A673 (cell line): ENCODE measurements at regions of chr14 and their contacts with region 1.

Region 1: GRCh38 chr14:102605025-102605424 is 12.6 kb downstream of the RCOR1 start:
- DNase-seq: no peak
- H3K4me3 ChIP-seq: no peak overlapping the region
- H3K27ac ChIP-seq: no peak overlapping the region
- H3K4me1 ChIP-seq: peaks cover 28% of the 10 kb centered on the region
- H3K27me3 ChIP-seq: no peaks in the 10 kb centered on the region
- CTCF ChIP-seq: no peak

Region 2: GRCh38 chr14:102645746-102646440 is 40.9 kb after region 1 on chr14:
- CTCF ChIA-PET with region 1: no interaction called
- POLR2A ChIA-PET with region 1: interaction called, 14 read pairs
- intact Hi-C with region 1: no loop called
- DNase-seq: peak; percentile 48
- H3K4me3 ChIP-seq: no peak overlapping the region
- H3K27ac ChIP-seq: peak overlapping the region; percentile 88
- H3K4me1 ChIP-seq: peaks cover 77% of the 10 kb centered on the region
- H3K27me3 ChIP-seq: no peaks in the 10 kb centered on the region
- CTCF ChIP-seq: no peak

Region 3: GRCh38 chr14:102683399-102684297 is 78.6 kb after region 1 on chr14:
- CTCF ChIA-PET with region 1: no interaction called
- POLR2A ChIA-PET with region 1: no interaction called
- intact Hi-C with region 1: no loop called
- DNase-seq: no peak
- H3K4me3 ChIP-seq: no peak overlapping the region
- H3K27ac ChIP-seq: peak overlapping the region; percentile 47
- H3K4me1 ChIP-seq: peaks cover 27% of the 10 kb centered on the region
- H3K27me3 ChIP-seq: no peaks in the 10 kb centered on the region
- CTCF ChIP-seq: no peak

Region 4: DNA sequence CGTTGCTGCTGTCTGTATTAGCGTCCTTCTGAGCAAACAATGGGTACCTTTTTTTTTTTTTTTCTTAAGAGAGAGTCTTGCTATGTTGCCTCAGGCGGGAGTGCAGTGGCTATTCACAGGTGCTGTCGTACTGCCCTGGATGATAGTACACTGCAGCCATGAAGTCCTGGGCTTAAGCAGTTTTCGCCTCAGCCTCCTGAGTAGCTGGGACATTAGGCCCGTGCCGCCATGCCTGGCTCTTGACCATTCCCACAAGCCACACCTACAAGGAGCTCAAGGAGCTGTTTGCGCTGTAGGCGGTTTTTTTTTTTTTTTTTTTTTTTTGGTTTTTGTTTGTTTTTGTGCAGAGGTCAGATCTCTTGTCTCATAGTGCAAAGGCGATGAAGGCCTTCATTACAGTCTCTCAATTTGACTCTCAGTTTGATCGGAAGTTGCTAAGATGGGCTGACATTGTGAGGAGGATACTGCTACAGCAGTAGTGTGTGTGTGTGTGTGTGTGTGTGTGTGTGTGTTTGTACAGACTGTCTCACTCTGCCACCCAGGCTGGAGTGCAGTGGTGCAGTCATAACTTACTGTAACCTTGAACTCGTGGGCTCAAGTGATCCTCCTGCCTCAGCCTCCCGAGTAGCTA is 206.3 kb after region 1 on chr14:
- CTCF ChIA-PET with region 1: no interaction called
- POLR2A ChIA-PET with region 1: interaction called, 11 read pairs
- intact Hi-C with region 1: no loop called
- DNase-seq: no peak
- H3K4me3 ChIP-seq: no peak overlapping the region
- H3K27ac ChIP-seq: no peak overlapping the region
- H3K4me1 ChIP-seq: no peaks in the 10 kb centered on the region
- H3K27me3 ChIP-seq: no peaks in the 10 kb centered on the region
- CTCF ChIP-seq: no peak

Region 5: DNA sequence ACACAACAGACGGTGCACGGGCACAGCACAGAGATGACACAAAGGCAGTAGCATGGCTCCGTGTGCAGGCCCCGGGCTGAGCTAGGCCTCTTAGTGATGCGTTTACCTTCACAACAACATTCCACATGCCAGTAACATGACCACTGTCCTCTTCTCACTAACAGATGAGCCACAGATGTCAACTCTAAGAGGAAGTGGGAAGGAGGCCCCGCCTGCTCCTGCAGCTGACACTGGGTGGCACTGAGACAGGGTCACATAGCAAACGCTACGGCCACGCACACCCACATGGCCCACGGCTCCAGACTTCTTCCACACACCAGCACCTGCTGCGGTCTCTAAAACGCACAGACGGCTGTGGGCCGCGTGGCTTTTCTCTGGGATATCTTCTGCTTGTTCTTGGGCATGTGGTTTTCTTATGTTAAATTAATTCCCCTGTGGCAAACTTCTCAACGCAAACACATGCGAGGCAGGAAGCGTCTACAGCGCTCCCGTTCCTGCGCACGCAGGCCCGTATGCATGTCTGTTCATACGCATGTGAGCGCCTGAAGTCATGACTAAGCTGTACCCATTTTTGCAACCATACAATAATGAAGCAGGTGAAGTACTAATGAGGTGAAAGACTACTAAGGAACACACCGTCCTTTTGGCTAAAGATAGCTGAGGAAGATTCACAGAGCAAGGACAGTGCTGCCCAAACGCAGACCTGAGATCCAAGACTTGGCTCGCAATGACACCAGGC is 344.2 kb after region 1 on chr14:
- CTCF ChIA-PET with region 1: no interaction called
- POLR2A ChIA-PET with region 1: interaction called, 19 read pairs
- intact Hi-C with region 1: no loop called
- DNase-seq: no peak
- H3K4me3 ChIP-seq: no peak overlapping the region
- H3K27ac ChIP-seq: no peak overlapping the region
- H3K4me1 ChIP-seq: peaks cover 20% of the 10 kb centered on the region
- H3K27me3 ChIP-seq: no peaks in the 10 kb centered on the region
- CTCF ChIP-seq: no peak

Region 6: GRCh38 chr14:103033681-103034096 is 428.7 kb after region 1 on chr14:
- CTCF ChIA-PET with region 1: no interaction called
- POLR2A ChIA-PET with region 1: interaction called, 17 read pairs
- intact Hi-C with region 1: no loop called
- DNase-seq: no peak
- H3K4me3 ChIP-seq: no peak overlapping the region
- H3K27ac ChIP-seq: no peak overlapping the region
- H3K4me1 ChIP-seq: peaks cover 7% of the 10 kb centered on the region
- H3K27me3 ChIP-seq: no peaks in the 10 kb centered on the region
- CTCF ChIP-seq: no peak